Activated B cell treated with CpG ODN at 0.5 μM for 24 hours (primary cell): ENCODE measurements at regions of chr3 and their contacts with region 1.

Region 1: DNA sequence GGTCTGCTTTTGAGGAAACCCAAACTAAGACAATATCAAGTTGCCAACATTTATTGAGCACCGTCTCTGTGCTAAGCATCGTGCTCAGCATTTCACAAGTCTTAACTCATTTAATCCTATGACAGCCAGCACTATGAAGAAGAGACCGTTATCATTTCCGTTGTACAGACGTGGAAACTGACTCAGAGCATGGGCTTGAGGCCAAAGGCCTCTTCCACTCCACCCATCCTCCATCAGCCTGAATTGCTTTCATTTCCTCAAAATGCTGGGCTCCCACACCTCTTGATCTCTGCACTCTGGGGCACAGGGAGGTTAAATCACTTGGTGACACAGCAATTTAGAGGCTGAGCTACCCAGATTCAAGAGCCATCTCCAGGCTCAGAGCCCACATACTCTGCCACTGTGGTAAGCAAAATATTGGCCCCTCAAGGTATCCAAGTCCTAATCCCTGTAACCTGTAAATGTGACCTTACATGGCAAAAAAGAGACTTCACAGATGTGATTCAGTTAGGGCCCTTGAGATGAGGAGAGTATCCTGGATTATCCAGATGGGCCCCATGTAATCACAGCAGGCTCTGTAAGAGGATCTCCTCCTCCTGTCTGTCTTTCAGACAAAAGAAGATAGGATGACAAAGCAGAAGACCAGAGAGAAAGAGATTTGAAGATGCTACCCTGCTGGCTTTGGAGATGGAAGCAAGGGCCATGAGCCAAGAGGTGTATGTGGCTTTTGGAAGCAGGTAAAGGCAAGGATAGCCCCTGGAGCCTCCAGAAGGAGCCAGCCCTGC is 24.3 kb upstream of the FLNB start:
- DNase-seq: peak; percentile 34
- ATAC-seq: peak; percentile 97
- H3K4me3 Mint-ChIP-seq: no peak overlapping the region
- H3K27ac Mint-ChIP-seq: peak overlapping the region; percentile 50
- H3K4me1 Mint-ChIP-seq: peaks cover 27% of the 10 kb centered on the region
- H3K27me3 Mint-ChIP-seq: no peaks in the 10 kb centered on the region
- CTCF ChIP-seq: no peak

Region 2: DNA sequence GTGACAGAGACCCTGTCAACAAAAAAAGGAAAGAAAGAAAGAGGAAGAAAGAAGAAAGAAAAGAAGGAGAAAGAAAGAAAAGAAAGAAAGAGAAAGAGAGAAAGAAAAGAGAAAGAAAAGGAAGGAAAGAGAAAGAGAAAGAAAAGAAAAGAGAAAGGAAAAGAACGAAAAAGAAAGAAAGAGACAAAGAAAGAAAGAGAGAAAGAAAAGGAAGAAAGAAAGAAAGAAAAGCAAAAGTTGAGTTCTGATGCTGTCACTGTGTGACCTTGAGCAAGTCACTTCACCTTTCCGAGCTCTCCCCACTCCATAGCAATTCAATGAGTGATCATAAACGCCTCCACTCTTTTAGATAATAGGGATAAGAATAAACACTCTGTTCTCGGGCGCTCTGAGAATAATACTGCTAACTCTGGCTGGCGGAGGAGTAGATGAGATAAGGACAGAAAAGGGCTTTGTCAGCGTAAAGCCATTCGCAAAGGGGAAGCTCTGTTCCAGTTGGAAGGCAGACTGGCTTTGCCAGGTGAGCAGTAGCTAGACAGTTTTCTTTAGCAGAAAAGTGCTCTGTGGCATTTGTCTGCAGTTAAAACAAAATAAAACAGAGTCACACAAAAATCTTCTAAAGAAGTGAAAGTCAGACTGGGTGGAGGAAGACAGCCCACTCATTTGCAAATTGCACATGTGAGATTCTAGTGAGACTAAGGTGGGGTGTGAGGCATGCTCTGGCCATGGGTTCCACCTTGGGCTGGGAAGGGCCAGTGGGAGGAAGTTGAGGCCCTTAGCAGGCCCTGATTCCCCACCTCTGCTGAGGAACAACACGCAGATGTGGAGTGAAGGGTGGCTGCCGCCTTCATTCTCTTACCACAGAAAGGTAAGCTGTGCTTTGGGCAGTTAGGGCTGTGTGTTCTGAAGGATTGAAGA is 14.7 kb after region 1 on chr3:
- CTCF ChIA-PET with region 1: no interaction called
- POLR2A ChIA-PET with region 1: no interaction called
- intact Hi-C with region 1: loop called (anchors 2 kb)
- DNase-seq: no peak
- ATAC-seq: peak; percentile 50
- H3K4me3 Mint-ChIP-seq: peak overlapping the region; percentile 63
- H3K27ac Mint-ChIP-seq: no peak overlapping the region
- H3K4me1 Mint-ChIP-seq: peaks cover 21% of the 10 kb centered on the region
- H3K27me3 Mint-ChIP-seq: no peaks in the 10 kb centered on the region
- CTCF ChIP-seq: no peak

Region 3: GRCh38 chr3:58383904-58384303 is 400.0 kb after region 1 on chr3:
- CTCF ChIA-PET with region 1: no interaction called
- POLR2A ChIA-PET with region 1: no interaction called
- intact Hi-C with region 1: no loop called
- DNase-seq: no peak
- ATAC-seq: no peak
- H3K4me3 Mint-ChIP-seq: no peak overlapping the region
- H3K27ac Mint-ChIP-seq: no peak overlapping the region
- H3K4me1 Mint-ChIP-seq: peaks cover 54% of the 10 kb centered on the region
- H3K27me3 Mint-ChIP-seq: no peaks in the 10 kb centered on the region
- CTCF ChIP-seq: no peak